IMR-90 (cell line): ENCODE measurements at regions of chr9 and their contacts with region 1.

Region 1: DNA sequence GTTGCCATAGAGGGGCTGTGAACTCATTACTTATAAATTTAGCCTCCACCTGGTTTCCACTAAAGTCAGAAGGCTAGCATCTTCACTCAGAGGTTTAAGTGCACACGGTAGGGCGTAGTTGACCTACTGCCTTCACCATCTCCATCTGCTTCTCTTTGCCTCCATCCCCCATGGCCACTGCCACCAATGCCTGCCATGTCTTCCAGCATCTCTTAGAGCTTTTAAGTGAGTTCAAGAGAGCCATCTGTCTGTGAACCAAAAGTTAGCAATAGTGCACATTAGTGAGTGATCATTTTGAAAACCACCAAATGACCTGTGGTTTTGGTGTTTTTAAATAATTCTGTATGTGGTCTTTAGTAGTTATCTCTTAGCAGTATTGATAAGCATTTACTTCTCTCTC is 102.0 kb downstream of the DMRTA1 start:
- DNase-seq: no peak
- ATAC-seq: no peak
- H3K4me3 ChIP-seq: no peak overlapping the region
- H3K27ac ChIP-seq: no peak overlapping the region
- H3K4me1 ChIP-seq: no peaks in the 10 kb centered on the region
- H3K27me3 ChIP-seq: no peaks in the 10 kb centered on the region
- CTCF ChIP-seq: no peak
- POLR2A ChIP-seq: no peak
- RAD21 ChIP-seq: no peak

Region 2: DNA sequence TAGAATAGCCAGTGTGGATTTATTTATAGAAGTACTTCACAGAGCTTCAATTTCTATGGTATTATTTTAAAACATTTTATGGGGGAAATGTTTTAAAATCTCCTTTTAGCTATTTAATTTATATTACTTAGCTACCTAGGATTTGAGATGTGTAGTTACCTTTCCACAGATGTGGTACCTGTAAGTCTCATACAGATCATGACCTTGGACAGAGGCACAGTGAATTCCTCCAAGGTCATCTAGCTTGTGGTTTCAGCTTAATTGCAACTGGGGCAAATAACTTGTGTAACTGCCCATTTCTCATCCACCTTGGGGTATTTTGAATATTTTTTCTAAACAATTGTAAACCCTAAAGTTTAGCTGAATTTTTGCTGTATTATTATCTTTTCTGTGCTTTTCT is 12.8 kb before region 1 on chr9:
- CTCF ChIA-PET with region 1: no interaction called
- POLR2A ChIA-PET with region 1: no interaction called
- dilution Hi-C with region 1: no loop called
- in situ Hi-C with region 1: no loop called
- intact Hi-C with region 1: loop called (anchors 1 kb)
- DNase-seq: no peak
- ATAC-seq: no peak
- H3K4me3 ChIP-seq: no peak overlapping the region
- H3K27ac ChIP-seq: no peak overlapping the region
- H3K4me1 ChIP-seq: no peaks in the 10 kb centered on the region
- H3K27me3 ChIP-seq: no peaks in the 10 kb centered on the region
- CTCF ChIP-seq: no peak
- POLR2A ChIP-seq: no peak
- RAD21 ChIP-seq: no peak